PC-3 (cell line): ENCODE measurements at regions of chr14 and their contacts with region 1.

Region 1: DNA sequence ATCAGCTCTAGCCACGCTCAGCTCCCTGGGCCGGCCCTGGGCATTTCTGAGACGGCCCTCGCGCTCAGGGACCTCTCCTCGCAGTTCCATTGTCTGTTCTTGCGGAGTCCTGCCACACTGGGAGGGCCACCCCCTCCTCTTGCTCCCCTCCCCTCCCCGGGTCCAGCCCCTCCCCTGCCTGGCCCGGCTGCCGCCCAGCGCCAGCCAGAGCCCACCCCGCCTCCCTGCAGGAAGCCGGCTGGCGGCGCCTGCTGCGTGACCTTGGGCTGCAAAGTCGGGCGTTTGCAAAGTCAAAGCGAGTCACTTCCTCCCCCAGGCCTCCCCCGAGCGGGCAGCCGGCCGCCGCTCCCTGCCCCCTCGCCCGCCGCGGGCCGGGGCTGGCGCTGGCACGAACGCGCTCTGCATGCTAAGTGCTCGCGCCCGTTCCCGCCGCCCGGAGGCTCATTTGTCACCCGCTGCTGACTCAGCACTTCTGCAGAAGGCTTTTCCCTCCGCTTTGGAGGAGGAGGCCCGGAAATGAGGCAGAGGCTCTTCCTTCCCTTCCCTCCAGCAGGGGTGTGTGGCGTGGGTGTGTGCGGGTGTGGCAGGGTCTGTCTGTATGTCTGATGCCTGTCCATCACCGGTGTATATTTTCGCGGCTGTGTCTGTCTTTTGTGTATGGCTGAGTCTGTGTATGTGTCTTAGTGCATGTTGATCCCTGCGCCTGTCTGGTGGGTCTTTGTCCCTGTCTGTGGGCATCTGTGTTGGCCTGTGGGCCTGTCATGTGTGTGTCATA is 72.0 kb downstream of the IRF2BPL start:
- DNase-seq: peak; percentile 99
- ATAC-seq: peak; percentile 52
- H3K4me3 ChIP-seq: peak overlapping the region; percentile 52
- H3K27ac ChIP-seq: peak overlapping the region; percentile 95
- H3K4me1 ChIP-seq: peaks cover 80% of the 10 kb centered on the region
- H3K27me3 ChIP-seq: no peaks in the 10 kb centered on the region
- CTCF ChIP-seq: no peak

Region 2: GRCh38 chr14:76918751-76919543 is 37.6 kb before region 1 on chr14:
- CTCF ChIA-PET with region 1: interaction called, 10 read pairs
- POLR2A ChIA-PET with region 1: interaction called, 6 read pairs
- intact Hi-C with region 1: loop called (anchors 1 kb)
- DNase-seq: peak; percentile 96
- ATAC-seq: peak; percentile 73
- H3K4me3 ChIP-seq: peak overlapping the region; percentile 28; the same call in 1 of the 2 replicates
- H3K27ac ChIP-seq: peak overlapping the region; percentile 97
- H3K4me1 ChIP-seq: peaks cover 60% of the 10 kb centered on the region
- H3K27me3 ChIP-seq: no peaks in the 10 kb centered on the region
- CTCF ChIP-seq: 0 out of 2 replicates have a peak, but pooled peaks have one; percentile 8

Region 3: GRCh38 chr14:76977793-76978720 is 21.6 kb after region 1 on chr14:
- CTCF ChIA-PET with region 1: interaction called, 16 read pairs
- POLR2A ChIA-PET with region 1: no interaction called
- intact Hi-C with region 1: no loop called
- DNase-seq: no peak
- ATAC-seq: no peak
- H3K4me3 ChIP-seq: no peak overlapping the region
- H3K27ac ChIP-seq: no peak overlapping the region
- H3K4me1 ChIP-seq: no peaks in the 10 kb centered on the region
- H3K27me3 ChIP-seq: no peaks in the 10 kb centered on the region
- CTCF ChIP-seq: no peak

Region 4: DNA sequence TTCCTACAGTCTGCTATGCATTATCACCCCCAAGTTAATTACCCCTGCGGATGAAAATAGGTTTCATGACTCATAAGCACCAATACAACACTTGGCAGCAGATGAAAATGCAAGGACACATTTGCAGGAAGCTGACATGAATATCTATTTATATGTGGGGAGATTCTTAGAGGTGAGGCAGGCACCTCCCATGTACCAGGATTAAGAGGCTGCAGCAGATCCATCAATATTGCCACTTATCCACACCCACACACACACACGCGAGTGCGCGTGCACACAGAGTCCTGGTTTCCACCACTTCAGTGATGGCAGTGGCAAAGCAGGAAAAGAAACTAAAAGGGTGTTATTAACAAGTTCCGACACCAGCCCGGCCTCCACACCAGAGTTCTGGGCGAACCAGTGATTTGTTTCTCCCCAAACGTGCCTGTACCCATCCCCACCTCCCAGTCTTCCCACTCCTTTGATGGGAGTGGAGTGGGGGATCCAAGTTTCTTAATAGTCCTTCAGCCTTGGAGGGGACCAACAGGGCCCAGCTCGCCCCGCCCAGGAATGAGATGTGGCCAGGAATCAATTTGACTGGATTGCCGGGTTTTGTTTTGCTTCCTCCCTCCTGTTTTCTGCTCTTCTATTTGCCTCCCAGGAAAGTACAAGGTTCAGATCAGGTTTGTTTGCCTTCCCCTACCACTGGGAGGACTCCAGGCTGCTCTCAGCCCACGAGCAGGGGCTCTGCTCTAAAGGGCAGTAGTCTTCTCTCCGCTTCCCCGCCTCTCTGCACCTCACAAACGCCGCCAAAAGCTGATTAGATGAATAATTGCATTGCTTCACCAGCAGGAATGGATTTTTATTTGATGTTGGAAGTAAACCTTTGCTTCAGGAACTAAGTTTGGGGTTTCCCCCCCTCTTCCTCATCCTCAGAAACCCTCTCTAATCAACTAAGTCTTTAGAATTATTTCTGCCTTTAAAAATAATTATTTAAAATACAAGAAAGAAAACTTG is 66.8 kb after region 1 on chr14:
- CTCF ChIA-PET with region 1: interaction called, 4 read pairs
- POLR2A ChIA-PET with region 1: interaction called, 3 read pairs
- intact Hi-C with region 1: loop called (anchors 2 kb)
- DNase-seq: peak; percentile 61
- ATAC-seq: peak; percentile 10
- H3K4me3 ChIP-seq: peak overlapping the region; percentile 99
- H3K27ac ChIP-seq: peak overlapping the region; percentile 91
- H3K4me1 ChIP-seq: peaks cover 25% of the 10 kb centered on the region
- H3K27me3 ChIP-seq: no peaks in the 10 kb centered on the region
- CTCF ChIP-seq: peak; percentile 35; the same call in 1 of the 2 replicates

Region 5: DNA sequence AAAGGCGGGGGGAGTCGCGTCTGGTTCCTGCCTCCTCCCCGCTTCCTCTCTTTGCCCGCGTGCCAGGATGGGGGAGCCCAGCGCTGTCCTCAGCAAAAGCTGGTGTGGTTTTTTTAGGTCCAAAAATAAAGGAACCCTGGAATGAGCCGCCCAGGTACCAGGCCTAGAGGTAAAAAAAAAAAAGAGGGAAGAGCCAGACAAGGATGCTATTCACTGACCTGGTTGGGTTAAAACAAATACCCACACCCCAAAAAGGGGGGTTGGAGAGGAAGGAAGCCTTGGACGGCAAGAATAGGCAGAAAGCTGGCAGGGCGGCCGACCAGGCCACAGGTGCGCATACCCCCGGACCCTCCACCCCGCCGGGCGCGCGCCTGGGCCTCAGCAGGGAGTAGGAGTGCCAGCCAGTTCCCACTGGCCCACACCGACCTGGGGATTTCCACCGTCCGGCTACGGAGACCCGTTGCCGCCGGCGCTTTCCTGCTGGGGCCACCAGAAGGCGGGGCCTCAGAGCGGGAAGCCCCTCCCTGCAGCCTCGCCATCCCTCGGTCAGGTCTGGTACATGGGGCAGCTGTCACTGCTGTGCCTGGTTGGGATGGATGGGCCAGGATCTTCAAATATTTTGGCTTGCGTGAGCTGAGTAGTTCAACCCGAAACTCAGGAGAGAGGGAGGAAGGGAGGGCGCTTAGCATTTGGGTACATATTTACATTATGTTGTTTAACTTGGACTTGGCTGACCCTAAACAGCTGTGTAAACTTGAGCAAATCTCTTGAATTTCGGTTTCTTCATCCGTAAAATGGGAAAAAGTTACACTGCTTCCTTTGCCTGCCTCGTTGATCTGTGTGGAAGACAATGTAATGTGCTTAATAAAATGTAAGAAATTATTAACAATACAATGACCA is 77.4 kb after region 1 on chr14:
- CTCF ChIA-PET with region 1: interaction called, 3 read pairs
- POLR2A ChIA-PET with region 1: interaction called, 6 read pairs
- intact Hi-C with region 1: loop called (anchors 2 kb)
- DNase-seq: peak; percentile 99
- ATAC-seq: peak; percentile 43
- H3K4me3 ChIP-seq: peak overlapping the region; percentile 67
- H3K27ac ChIP-seq: peak overlapping the region; percentile 97
- H3K4me1 ChIP-seq: peaks cover 84% of the 10 kb centered on the region
- H3K27me3 ChIP-seq: no peaks in the 10 kb centered on the region
- CTCF ChIP-seq: no peak

Region 6: GRCh38 chr14:77436042-77436441 is 479.5 kb after region 1 on chr14:
- CTCF ChIA-PET with region 1: no interaction called
- POLR2A ChIA-PET with region 1: no interaction called
- intact Hi-C with region 1: no loop called
- DNase-seq: peak; percentile 37
- ATAC-seq: peak; percentile 62; the same call in 1 of the 2 replicates
- H3K4me3 ChIP-seq: no peak overlapping the region
- H3K27ac ChIP-seq: no peak overlapping the region
- H3K4me1 ChIP-seq: no peaks in the 10 kb centered on the region
- H3K27me3 ChIP-seq: no peaks in the 10 kb centered on the region
- CTCF ChIP-seq: no peak

Region 7: DNA sequence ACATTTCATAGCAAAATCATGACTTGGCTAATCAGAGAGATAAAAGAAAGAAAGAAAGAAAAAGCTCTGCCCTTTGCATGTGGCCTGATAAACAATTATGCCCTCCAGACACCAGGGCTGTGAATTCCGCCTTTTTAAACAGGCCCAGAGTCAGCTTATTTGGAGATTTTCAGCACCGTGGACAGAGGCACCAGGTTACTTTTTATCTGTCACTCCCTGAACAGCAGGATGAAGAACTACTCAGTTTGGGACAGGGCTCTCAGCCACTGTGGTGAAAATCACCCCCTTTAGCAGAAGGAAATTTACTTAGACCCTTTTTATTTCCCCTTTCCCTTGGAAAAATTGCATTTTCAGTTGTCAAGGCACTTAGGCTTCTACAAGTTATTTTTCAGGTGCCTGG is 1573.6 kb after region 1 on chr14:
- CTCF ChIA-PET with region 1: no interaction called
- POLR2A ChIA-PET with region 1: no interaction called
- intact Hi-C with region 1: no loop called
- DNase-seq: peak; percentile 23
- ATAC-seq: no peak
- H3K4me3 ChIP-seq: no peak overlapping the region
- H3K27ac ChIP-seq: no peak overlapping the region
- H3K4me1 ChIP-seq: no peaks in the 10 kb centered on the region
- H3K27me3 ChIP-seq: no peaks in the 10 kb centered on the region
- CTCF ChIP-seq: no peak